Activated T-helper 2 cell treated with anti-CD3 and anti-CD28 coated beads, Interferon-gamma antibody, Interleukin-2, Interleukin-4, amounts not matched to agents 10 μg/mL and 5 μg/mL and 100 μg/mL, durations not matched to agents 14 hours and 24 hours and 36 hours (primary cell): ENCODE measurements at regions of chr19 and their contacts with region 1.

Region 1: DNA sequence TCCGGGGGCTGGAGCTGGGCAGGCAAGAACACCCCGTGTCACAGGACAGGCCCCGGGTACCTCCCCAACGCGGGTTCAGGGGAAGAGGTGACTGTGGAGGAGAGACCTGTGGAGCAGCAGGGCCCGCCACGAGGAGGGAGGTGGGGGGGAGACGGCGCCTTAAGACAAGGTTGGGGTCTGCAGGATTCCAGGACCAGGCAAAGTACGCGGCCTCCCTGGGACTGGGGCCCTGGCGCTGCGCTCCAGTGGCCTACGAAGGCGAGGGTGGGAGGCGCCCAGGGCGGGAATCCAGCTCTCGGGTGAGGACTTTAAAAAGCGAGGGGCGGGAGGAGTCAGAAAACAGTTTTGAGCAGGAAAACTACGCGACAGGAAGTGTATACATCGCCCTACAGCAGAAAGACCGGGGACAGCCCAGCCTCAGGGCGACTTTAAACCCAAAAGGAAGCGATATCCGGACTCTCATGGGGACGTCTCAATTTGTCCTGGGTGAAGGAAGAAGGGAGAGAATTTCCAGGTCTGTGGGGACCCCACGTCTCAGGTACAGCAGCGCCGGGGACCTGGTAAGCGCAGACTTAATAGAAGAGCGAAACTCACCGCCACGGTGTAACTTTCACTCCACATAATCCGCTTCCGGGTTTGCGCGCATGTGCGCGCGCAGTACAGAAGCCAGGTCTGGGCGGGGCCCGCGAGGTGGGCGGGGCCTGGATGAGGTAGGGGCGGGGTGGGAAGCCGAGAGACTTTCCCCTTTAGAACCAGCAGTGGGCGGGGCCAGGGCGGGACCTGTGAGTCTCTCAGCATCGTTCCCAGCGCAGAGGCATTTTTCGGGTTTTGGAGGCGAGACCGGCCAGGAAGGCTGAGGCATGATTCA is at the start of gene ZNF83:
- DNase-seq: peak; percentile 92
- H3K4me3 Mint-ChIP-seq: peak within 1 kb of the TSS; percentile 89
- H3K27ac Mint-ChIP-seq: peak within 1 kb of the TSS; percentile 95
- H3K4me1 Mint-ChIP-seq: peaks cover 13% of the 10 kb centered on the region
- H3K27me3 Mint-ChIP-seq: no peaks in the 10 kb centered on the region
- total RNA-seq, gene ZNF83: 23.1 and 24.1 TPM in 2 replicates

Region 2: DNA sequence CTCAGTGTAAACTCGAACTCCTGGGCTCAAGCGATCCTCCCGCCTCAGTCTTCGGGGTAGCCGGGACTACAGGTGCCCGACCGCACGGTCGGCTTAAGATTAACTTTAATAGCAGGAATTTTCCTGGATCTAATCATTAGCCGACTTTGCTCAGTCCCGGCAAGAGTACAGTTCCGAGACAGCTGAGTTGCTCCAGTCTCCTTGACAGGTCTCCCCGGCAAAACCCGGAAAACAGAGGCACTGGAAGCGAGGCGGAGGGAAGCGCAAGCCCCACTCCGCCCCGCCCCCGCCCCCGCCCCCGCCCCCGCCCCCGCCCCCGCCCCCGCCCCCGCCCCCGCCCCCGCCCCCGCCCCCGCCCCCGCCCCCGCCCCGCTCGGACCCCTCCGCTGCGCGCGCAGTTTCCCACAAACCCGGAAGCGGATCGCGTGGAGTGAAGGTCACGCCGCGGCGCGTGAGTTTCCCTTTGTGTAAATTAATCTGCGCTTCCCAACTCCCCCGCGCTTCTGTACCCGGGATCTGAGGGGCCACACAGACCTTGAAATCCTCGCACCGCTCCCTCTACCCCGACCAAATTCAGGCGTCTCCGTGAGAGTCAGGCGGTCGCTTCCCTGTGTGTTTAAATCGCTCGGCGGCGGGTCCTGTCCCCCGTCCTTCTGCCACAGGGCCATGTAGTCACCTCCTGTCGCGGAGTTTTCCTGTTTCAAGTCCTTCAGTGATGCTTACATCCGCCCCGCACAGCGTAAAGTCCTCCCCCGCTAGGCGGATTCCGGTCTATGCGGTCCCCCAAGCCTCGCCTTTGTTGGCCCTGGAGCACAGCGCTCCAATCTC is 341.0 kb before region 1 on chr19 and contains the start of gene ZNF480:
- intact Hi-C with region 1: loop called (anchors 1 kb)
- DNase-seq: peak; percentile 74
- H3K4me3 Mint-ChIP-seq: peak within 1 kb of the TSS; percentile 89
- H3K27ac Mint-ChIP-seq: peak within 1 kb of the TSS; percentile 94
- H3K4me1 Mint-ChIP-seq: peaks cover 14% of the 10 kb centered on the region
- H3K27me3 Mint-ChIP-seq: peaks cover 2% of the 10 kb centered on the region
- total RNA-seq, gene ZNF480: 3.2 and 3.6 TPM in 2 replicates

Region 3: GRCh38 chr19:52397310-52398080 is 240.5 kb before region 1 on chr19 and contains the start of gene ZNF528:
- intact Hi-C with region 1: loop called (anchors 5 kb)
- DNase-seq: peak; percentile 85
- H3K4me3 Mint-ChIP-seq: peak within 1 kb of the TSS; percentile 92
- H3K27ac Mint-ChIP-seq: peak within 1 kb of the TSS; percentile 87
- H3K4me1 Mint-ChIP-seq: peaks cover 12% of the 10 kb centered on the region
- H3K27me3 Mint-ChIP-seq: no peaks in the 10 kb centered on the region
- total RNA-seq, gene ZNF528: 5.2 and 5.5 TPM in 2 replicates

Region 4: GRCh38 chr19:52527134-52527955 is 110.6 kb before region 1 on chr19 and contains the start of gene ZNF808:
- intact Hi-C with region 1: loop called (anchors 1 kb)
- DNase-seq: peak; percentile 87
- H3K4me3 Mint-ChIP-seq: peak within 1 kb of the TSS; percentile 96
- H3K27ac Mint-ChIP-seq: peak within 1 kb of the TSS; percentile 97
- H3K4me1 Mint-ChIP-seq: peaks cover 12% of the 10 kb centered on the region
- H3K27me3 Mint-ChIP-seq: no peaks in the 10 kb centered on the region
- total RNA-seq, gene ZNF808: 20.7 and 22.6 TPM in 2 replicates

Region 5: DNA sequence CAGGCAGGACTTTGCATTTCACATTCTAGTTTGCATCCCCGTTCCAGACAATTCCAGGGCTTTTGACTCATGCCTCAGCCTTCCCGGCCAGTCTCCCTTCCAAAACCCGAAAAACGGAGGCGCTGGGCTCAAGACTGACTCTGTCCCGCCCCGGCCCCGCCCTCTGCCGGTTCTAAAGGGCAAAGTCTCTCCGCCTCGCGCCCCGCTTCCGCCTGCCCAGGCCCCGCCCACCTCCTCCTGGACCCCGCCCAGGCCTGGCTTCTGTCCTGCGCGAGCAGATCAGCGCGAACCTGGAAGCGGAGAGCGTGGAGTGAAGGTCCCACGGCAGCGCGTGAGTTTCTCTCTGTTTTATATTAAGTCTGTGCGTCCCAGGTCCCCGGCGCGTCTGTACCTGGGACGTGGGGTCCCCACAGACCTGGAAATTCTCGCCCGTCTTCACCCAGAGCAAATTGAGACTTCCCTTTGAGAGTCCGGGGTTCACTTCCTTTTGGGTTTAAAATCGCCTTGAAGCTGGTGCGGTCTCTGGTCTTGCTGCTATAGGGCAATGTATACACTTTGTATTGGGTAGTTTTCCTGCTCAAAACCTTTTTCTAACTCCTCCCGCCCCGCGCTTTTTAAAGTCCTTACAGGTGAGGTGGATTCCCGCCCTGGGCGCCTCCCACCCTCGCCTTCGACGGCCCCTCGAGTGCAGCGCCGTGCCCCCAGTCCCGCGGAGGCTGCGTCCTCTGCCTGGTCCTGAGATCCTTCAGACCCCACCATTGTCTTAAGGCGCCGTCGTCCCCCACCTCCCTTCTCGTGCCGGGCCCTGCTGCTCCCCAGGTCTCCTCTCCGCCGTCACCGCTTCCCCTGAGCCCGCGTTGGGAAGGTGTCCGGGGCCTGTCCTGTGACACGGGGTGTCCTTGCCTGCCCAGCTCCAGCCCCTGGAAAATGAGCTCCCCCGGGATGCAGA is 36.7 kb before region 1 on chr19:
- intact Hi-C with region 1: loop called (anchors 2 kb)
- DNase-seq: peak; percentile 88
- H3K4me3 Mint-ChIP-seq: peak overlapping the region; percentile 89
- H3K27ac Mint-ChIP-seq: peak overlapping the region; percentile 35
- H3K4me1 Mint-ChIP-seq: peaks cover 10% of the 10 kb centered on the region
- H3K27me3 Mint-ChIP-seq: no peaks in the 10 kb centered on the region

Region 6: DNA sequence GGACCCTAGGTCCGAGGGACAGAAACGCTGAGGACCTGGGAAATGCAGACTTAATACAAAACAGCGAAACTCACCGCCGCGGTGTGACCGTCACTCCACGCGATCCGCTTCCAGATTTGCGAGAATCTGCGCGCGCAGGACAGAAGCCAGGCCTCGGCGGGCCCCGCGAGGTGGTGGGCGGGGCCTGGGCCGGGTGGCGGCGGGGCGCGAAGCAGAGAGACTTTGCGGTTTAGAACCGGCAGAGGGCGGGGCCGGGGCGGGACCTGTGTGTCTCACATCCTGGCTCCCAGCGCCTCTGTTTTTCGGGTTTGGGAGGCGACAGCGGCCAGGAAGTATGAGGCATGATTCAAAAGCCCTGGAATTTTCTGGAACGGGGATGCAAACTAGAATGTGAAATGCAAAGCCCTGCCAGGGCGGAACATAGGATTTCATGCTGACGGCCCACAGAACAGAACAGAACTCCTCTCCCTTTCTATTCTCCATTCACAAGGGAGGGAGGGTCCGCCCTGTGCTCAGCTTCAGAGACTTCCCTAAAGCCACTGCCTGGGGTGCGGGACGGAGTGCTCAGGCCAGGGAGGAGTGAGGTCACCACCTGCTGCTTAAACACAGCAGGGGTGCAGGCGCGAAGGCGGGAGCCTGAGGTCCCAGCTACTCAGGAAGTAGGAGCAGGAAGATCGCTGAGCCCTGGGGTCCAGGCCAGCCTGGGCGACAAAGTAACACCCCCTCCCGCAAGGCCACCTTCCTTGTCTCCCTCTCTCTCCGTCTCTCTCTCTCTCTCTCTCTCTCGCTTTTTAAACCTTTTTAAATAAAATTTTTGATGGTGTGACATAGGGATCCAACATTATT is 52.6 kb after region 1 on chr19:
- intact Hi-C with region 1: loop called (anchors 2 kb)
- DNase-seq: peak; percentile 86
- H3K4me3 Mint-ChIP-seq: peak overlapping the region; percentile 95
- H3K27ac Mint-ChIP-seq: peak overlapping the region; percentile 94
- H3K4me1 Mint-ChIP-seq: peaks cover 22% of the 10 kb centered on the region
- H3K27me3 Mint-ChIP-seq: no peaks in the 10 kb centered on the region